ENCODE measurements at regions of chr20 and their contacts with region 1.

Region 1: GRCh38 chr20:59055295-59055694 is 12.7 kb upstream of the PRELID3B start:
- DNase-seq: no peak
- H3K4me3 Mint-ChIP-seq: no peak overlapping the region
- H3K27ac Mint-ChIP-seq: no peak overlapping the region
- H3K4me1 Mint-ChIP-seq: no peaks in the 10 kb centered on the region
- H3K27me3 Mint-ChIP-seq: peaks cover 39% of the 10 kb centered on the region

Region 2: DNA sequence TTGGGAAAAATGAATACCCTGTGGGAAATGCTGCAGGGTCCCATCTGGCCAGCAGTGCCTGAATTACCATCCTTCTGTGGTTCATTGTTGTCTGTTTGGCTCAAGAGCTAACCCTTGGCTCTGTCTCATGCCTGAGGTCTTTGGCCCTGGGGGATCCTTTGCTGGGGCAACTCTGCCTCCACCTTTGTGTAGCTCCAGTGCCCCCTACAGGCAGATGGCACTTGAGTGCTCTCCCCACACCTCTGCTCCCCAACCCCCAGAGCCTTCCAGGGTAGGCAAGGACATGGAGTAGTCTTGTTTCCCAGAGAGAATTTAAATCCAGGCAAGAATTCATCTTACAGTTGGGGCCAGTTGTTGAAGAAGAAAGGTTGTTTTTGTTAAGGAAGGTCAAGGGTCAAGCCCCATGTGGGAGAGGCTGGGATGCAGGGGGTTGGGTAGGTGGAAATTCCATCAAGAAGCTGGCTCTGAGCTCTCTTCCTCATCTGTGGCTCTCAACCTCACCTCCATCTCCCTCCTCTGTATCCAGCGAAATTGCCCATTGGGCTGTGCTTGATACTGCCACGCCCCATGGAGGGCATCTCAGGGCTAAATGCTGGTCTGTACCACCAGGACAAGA is 152.6 kb after region 1 on chr20:
- intact Hi-C with region 1: loop called (anchors 1 kb)
- DNase-seq: peak; percentile 65
- H3K4me3 Mint-ChIP-seq: no peak overlapping the region
- H3K27ac Mint-ChIP-seq: peak overlapping the region; percentile 49
- H3K4me1 Mint-ChIP-seq: peaks cover 13% of the 10 kb centered on the region
- H3K27me3 Mint-ChIP-seq: no peaks in the 10 kb centered on the region

Measured in activated T-helper 1 cell treated with anti-CD3 and anti-CD28 coated beads, Interleukin-12 subunit alpha, Interleukin-12 subunit beta, Interleukin-2, Interleukin-4 antibody, amounts not matched to agents 30 ng/mL and 10 ng/mL and 1 ng/mL, durations not matched to agents 14 hours and 24 hours and 36 hours (primary cell).